Activated T-helper 1 cell treated with anti-CD3 and anti-CD28 coated beads, Interleukin-12 subunit alpha, Interleukin-12 subunit beta, Interleukin-2, Interleukin-4 antibody, amounts not matched to agents 30 ng/mL and 10 ng/mL and 1 ng/mL, durations not matched to agents 14 hours and 24 hours and 36 hours (primary cell): ENCODE measurements at regions of chr1 and their contacts with region 1.

Region 1: GRCh38 chr1:75632350-75632949 is 21.5 kb upstream of the SLC44A5 start:
- DNase-seq: no peak
- H3K4me3 Mint-ChIP-seq: no peak overlapping the region
- H3K27ac Mint-ChIP-seq: no peak overlapping the region
- H3K4me1 Mint-ChIP-seq: no peaks in the 10 kb centered on the region
- H3K27me3 Mint-ChIP-seq: peaks cover 4% of the 10 kb centered on the region

Region 2: DNA sequence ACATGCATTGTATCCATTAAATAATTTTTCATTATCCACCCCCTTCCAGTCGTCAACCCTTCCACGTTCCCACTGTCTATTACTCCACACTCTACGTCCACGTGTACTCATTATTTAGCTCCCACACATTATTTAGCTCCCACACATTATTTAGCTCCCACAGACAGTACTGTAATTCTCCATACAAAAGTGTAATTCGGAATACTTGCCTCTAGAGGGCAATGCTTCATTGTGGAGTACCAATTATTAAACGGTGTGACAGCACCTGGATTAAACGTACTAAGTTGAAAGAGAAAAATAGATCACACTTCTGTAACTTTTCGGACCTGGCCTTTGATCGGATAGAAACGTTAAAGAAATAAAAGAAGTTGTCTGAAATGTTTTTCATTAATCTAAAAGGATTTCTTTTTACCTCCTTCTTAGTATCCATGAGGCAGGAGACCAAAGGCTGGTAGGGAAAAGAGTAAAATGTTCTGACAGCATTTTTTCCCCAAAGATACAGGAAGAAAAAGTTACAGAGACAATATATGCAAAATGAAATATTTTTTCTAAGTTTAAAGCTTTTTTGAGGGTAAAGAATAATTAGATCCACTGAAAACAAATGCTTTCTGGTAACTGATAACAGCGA is 399.0 kb before region 1 on chr1:
- intact Hi-C with region 1: loop called (anchors 2 kb)
- DNase-seq: no peak
- H3K4me3 Mint-ChIP-seq: no peak overlapping the region
- H3K27ac Mint-ChIP-seq: no peak overlapping the region
- H3K4me1 Mint-ChIP-seq: no peaks in the 10 kb centered on the region
- H3K27me3 Mint-ChIP-seq: no peaks in the 10 kb centered on the region

Region 3: GRCh38 chr1:75265792-75266191 is 366.7 kb before region 1 on chr1:
- intact Hi-C with region 1: loop called (anchors 2 kb)
- DNase-seq: no peak
- H3K4me3 Mint-ChIP-seq: no peak overlapping the region
- H3K27ac Mint-ChIP-seq: no peak overlapping the region
- H3K4me1 Mint-ChIP-seq: no peaks in the 10 kb centered on the region
- H3K27me3 Mint-ChIP-seq: no peaks in the 10 kb centered on the region

Region 4: GRCh38 chr1:75611014-75611413 is 21.4 kb before region 1 on chr1 and contains the start of gene SLC44A5:
- intact Hi-C with region 1: no loop called
- DNase-seq: no peak
- H3K4me3 Mint-ChIP-seq: no peak within 1 kb of the TSS
- H3K27ac Mint-ChIP-seq: no peak within 1 kb of the TSS
- H3K4me1 Mint-ChIP-seq: peaks cover 8% of the 10 kb centered on the region
- H3K27me3 Mint-ChIP-seq: peaks cover 30% of the 10 kb centered on the region
- total RNA-seq, gene SLC44A5: not detected in 2 replicates

Region 5: DNA sequence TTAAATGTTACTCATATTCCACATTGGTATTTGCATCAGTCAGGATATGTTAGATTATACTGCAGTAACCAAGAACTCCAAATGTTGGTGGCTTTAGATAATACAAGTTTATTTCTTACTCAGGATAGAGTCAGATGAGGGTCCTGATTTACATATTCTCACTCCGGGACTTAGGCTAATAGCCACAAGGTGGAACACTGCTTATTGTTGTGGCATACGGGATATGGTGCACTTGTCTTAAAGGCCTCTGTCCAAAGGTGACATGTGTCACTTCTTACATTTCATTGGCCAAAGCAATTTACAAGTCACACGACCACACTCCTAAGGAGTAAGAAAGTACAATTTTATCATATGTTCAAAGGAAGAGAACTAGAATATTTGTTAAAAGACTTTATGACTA is 63.5 kb after region 1 on chr1:
- intact Hi-C with region 1: no loop called
- DNase-seq: no peak
- H3K4me3 Mint-ChIP-seq: no peak overlapping the region
- H3K27ac Mint-ChIP-seq: no peak overlapping the region
- H3K4me1 Mint-ChIP-seq: no peaks in the 10 kb centered on the region
- H3K27me3 Mint-ChIP-seq: no peaks in the 10 kb centered on the region